ENCODE measurements at regions of chr1 and their contacts with region 1.

Region 1: DNA sequence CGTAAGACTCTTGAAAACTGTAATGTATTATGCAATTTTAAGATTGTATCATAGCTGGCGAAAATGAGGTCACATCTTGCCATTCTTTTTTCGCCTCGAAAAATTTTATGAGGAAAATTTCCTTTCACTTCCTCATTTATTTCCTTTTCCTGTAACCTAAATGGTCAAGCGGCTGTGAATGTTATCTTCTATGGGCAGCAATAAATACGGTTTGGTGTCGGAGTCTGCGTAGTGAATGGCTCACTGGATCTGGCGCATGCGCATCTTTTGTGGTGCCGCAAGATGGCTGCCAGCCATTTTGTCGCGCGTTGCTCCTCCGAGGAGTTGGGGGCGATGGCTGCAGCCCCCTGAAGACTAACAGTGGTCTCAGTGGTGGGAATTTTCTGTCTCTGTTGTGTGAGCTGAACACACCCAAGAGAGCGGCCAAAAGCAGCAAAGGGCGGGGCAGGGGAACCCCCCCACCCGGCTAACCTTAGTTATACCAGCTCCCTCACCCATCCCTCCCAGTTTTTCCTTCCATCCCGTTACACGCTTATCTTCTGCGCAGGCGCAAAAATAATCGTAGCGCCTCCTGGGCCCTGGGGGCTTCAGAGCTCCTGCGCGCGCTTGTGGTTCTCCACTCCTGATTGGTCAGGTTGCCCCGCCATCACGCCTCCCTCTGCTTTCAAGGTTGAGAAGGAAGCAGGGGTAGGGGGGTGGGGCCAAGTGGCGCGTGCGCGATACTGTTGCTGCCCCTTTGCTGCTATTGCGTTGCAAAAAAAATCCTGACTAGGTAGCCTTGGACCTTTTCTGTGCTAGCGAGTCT is at the start of gene RPRD2:
- DNase-seq: peak; percentile 99
- H3K4me3 ChIP-seq: peak within 1 kb of the TSS; percentile 78 to 99 (median 96)
- H3K27ac ChIP-seq: peak within 1 kb of the TSS; percentile 94
- H3K4me1 ChIP-seq: peaks cover 6% of the 10 kb centered on the region
- H3K27me3 ChIP-seq: no peaks in the 10 kb centered on the region
- CTCF ChIP-seq: peak in 1 of 2 donors; percentile 5
- total RNA-seq, gene RPRD2: 12.7 to 22.7 TPM

Region 2: DNA sequence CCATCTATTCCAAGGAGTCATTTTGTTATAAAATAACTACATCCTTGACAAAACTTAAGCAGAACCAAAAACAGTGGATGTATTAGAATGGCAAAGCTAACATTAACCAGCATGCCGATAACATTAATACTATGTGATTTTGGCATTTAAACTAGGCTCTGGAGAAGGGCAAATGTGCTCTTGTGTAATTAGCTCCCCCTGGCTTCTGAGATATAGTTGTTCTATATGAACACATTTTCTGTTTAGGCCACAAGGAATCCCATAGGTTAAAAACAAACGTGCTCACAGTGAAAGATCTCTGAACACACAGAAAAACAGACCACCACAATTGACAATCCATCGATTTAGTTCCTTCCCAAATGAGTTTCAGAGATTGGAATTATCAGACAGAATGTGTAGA is 66.2 kb after region 1 on chr1:
- CTCF ChIA-PET with region 1: no interaction called
- dilution Hi-C with region 1: no loop called
- in situ Hi-C with region 1: no loop called
- intact Hi-C with region 1: loop called (anchors 2 kb)
- DNase-seq: peak; percentile 2
- H3K4me3 ChIP-seq: no peak overlapping the region
- H3K27ac ChIP-seq: no peak overlapping the region
- H3K4me1 ChIP-seq: no peaks in the 10 kb centered on the region
- H3K27me3 ChIP-seq: no peaks in the 10 kb centered on the region
- CTCF ChIP-seq: peak in 1 of 2 donors; percentile 39

Region 3: GRCh38 chr1:150486964-150487762 is 123.5 kb after region 1 on chr1 and contains the start of gene TARS2:
- CTCF ChIA-PET with region 1: no interaction called
- dilution Hi-C with region 1: no loop called
- in situ Hi-C with region 1: no loop called
- intact Hi-C with region 1: loop called (anchors 10 kb)
- DNase-seq: peak; percentile 97
- H3K4me3 ChIP-seq: peak within 1 kb of the TSS; percentile 66 to 81 (median 69)
- H3K27ac ChIP-seq: peak within 1 kb of the TSS; percentile 83
- H3K4me1 ChIP-seq: peaks cover 16% of the 10 kb centered on the region
- H3K27me3 ChIP-seq: no peaks in the 10 kb centered on the region
- CTCF ChIP-seq: peak in 1 of 2 donors; percentile 29
- total RNA-seq, gene TARS2: 23.3 to 27.0 TPM